T-cell (primary cell): ENCODE measurements at regions of chr5 and their contacts with region 1.

Region 1: DNA sequence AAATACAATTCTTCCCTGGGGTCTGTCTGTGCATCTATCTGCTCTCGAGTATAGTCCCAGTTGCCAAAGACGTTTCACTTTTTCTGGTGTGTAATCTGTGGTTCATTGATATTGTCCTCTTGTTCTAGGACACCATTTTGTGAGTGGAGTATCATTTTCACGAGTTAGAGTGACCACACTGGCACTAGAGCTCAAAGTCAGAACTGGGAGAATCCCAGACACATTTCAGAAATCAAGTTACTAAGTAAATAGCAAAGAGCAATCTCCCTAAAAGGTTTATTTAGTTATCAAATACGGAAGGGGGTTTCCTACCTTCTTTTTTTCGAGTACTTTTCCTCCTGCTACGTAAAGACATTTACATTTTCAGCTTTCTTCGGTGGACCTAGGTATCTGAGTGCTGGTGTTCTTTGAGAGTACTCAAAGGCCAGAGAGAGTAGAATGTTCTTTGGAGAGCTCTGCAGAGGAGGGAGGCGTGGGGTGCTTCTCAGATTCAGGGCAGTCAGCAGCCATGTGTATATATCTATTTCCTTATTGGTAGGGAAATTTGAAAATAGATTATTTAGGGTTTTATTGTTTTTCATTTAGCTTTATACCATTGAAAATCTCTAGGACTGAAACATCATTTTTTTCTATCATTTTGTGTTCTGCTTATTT is 8.9 kb upstream of the HSPA9 start:
- DNase-seq: no peak
- ATAC-seq: no peak
- H3K4me3 ChIP-seq: no peak overlapping the region
- H3K4me3 Mint-ChIP-seq: no peak overlapping the region
- H3K27ac ChIP-seq: no peak overlapping the region
- H3K27ac Mint-ChIP-seq: no peak overlapping the region
- H3K4me1 ChIP-seq: peaks cover 0 to 4% of the 10 kb centered on the region in 2 experiments
- H3K4me1 Mint-ChIP-seq: peaks cover 0 to 4% (median 4%) of the 10 kb centered on the region in 3 donors
- H3K27me3 ChIP-seq: peaks cover 0 to 5% of the 10 kb centered on the region in 2 experiments
- H3K27me3 Mint-ChIP-seq: peaks cover 6 to 20% of the 10 kb centered on the region in 2 donors

Region 2: DNA sequence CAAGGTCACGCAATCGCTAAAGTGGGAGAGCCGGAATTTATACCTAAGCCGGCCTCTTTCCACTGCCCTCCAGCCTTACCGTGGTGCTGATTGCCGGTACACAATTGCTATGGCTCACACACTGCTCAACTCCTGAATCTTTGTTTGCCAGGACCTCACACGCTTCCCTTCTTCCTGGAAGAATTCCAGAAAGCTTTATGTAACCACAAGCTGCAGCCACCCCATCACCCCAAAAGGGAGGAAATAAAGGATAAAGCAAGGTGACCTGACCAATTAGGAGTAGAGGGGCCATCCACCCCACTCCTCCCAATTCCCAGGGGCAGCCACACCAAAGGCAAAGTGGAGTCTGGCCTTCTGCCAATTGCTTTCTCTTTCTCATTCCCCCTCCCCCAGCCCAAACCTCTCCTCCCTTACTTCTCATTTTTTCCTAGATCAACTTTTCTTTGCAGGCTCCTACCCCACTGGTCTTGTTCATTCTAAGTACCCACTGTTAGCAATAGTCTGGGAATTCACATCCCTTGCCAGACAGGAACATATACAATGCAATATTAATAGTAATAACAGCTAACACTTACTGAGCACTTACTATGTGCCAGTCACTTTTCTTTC is 353.0 kb before region 1 on chr5:
- CTCF ChIA-PET with region 1: interaction called in 1 of 2 experiments, 10 read pairs
- POLR2A ChIA-PET with region 1: no interaction called
- DNase-seq: no peak
- ATAC-seq: no peak
- H3K4me3 ChIP-seq: no peak overlapping the region
- H3K4me3 Mint-ChIP-seq: no peak overlapping the region
- H3K27ac ChIP-seq: no peak overlapping the region
- H3K27ac Mint-ChIP-seq: no peak overlapping the region
- H3K4me1 ChIP-seq: no peaks in the 10 kb centered on the region
- H3K4me1 Mint-ChIP-seq: no peaks in the 10 kb centered on the region
- H3K27me3 ChIP-seq: peaks cover 0 to 14% of the 10 kb centered on the region in 2 experiments
- H3K27me3 Mint-ChIP-seq: peaks cover 13 to 21% of the 10 kb centered on the region in 2 donors

Region 3: GRCh38 chr5:138568061-138568824 is 15.9 kb before region 1 on chr5:
- CTCF ChIA-PET with region 1: no interaction called
- POLR2A ChIA-PET with region 1: interaction called in 1 of 2 experiments, 13 read pairs
- DNase-seq: no peak
- ATAC-seq: no peak
- H3K4me3 ChIP-seq: no peak overlapping the region
- H3K4me3 Mint-ChIP-seq: no peak overlapping the region
- H3K27ac ChIP-seq: no peak overlapping the region
- H3K27ac Mint-ChIP-seq: peak overlapping the region; percentile 41 to 64
- H3K4me1 ChIP-seq: peaks cover 2 to 38% of the 10 kb centered on the region in 2 experiments
- H3K4me1 Mint-ChIP-seq: peaks cover 47 to 76% (median 66%) of the 10 kb centered on the region in 3 donors
- H3K27me3 ChIP-seq: no peaks in the 10 kb centered on the region
- H3K27me3 Mint-ChIP-seq: no peaks in the 10 kb centered on the region